ENCODE measurements at regions of chr12 and their contacts with region 1.

Region 1: DNA sequence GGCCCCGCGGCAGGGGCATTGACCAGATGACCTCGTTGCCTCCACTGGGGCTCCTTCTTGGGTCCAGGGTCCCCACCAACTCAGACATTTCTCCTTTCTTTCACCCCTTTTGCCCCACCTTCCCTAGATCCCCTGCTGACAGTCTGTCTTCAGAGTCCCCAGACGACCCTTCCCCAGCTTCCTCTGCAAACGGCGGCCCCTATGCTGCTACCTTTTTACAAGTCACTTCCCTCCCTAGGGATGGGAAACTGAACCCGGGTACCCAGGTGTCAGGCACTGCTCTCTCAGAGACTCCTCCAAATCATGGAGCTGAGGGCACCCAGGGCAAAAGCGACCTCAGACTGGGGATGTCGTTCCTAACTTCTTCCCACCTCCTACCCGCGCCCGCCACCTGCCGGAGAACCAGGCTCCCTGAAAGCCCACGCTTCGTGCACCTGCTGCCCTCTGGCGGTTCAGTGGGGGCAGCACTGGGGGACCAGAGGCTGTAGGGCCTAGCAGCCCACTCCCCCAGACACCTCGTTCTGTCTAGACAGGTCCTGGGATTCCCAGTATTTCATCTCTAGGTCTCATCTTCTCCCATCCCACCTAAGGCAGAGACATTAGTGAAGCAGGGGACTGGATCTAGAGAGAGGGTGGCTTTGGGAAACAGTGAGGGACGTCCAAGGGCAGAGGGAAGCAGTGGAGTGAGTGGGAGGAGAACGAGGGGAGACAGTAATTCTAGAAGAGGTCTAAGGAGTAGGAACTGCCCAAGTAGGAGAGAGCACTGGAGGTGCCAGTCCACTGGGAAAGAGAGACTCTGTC is 4.9 kb downstream of the ZNF385A start:
- DNase-seq: peak; percentile 92
- ATAC-seq: peak; percentile 98
- H3K4me3 Mint-ChIP-seq: no peak overlapping the region
- H3K27ac Mint-ChIP-seq: peak overlapping the region; percentile 8
- H3K4me1 Mint-ChIP-seq: peaks cover 8% of the 10 kb centered on the region
- H3K27me3 Mint-ChIP-seq: no peaks in the 10 kb centered on the region

Region 2: DNA sequence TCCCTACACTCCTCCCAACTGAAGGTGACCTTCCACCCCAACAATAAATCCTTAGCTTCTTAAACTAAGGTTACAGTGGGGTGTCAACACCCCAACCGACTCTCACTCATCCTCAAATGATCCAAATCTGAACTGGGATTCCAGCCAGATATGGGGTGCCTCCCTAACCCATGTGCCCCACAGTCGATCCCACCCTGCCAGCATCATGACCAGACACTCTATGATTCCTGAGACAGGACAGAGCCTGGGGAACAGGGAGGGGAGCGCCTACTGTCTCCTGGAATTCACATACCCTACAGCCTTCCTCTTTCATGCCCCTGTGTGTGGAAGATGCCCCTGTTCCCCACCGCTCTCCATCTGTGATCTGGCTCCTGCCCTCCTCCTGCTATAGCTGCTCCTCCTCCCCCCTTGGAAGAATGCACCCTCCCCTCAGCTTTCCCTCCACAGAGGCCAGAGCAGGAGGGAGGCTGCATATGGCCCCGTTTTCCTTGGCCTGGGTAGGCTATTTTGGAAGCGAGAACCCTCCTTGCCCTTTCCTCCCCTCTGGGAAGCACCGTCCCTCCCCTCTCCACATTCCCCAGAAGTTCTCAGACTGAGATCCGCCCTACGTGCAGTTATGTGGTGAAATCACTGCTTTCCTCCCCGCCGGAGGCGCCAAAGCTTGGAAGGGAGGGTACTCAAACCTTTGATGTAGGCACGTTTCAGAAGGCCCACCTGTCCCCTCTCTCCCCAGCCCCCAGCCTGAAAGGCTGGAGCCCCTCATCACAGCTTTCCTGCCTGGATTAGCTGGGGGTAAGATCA is 238.8 kb before region 1 on chr12:
- CTCF ChIA-PET with region 1: no interaction called
- DNase-seq: no peak
- ATAC-seq: no peak
- H3K4me3 Mint-ChIP-seq: no peak overlapping the region
- H3K27ac Mint-ChIP-seq: no peak overlapping the region
- H3K4me1 Mint-ChIP-seq: no peaks in the 10 kb centered on the region
- H3K27me3 Mint-ChIP-seq: peaks cover 61% of the 10 kb centered on the region

Region 3: DNA sequence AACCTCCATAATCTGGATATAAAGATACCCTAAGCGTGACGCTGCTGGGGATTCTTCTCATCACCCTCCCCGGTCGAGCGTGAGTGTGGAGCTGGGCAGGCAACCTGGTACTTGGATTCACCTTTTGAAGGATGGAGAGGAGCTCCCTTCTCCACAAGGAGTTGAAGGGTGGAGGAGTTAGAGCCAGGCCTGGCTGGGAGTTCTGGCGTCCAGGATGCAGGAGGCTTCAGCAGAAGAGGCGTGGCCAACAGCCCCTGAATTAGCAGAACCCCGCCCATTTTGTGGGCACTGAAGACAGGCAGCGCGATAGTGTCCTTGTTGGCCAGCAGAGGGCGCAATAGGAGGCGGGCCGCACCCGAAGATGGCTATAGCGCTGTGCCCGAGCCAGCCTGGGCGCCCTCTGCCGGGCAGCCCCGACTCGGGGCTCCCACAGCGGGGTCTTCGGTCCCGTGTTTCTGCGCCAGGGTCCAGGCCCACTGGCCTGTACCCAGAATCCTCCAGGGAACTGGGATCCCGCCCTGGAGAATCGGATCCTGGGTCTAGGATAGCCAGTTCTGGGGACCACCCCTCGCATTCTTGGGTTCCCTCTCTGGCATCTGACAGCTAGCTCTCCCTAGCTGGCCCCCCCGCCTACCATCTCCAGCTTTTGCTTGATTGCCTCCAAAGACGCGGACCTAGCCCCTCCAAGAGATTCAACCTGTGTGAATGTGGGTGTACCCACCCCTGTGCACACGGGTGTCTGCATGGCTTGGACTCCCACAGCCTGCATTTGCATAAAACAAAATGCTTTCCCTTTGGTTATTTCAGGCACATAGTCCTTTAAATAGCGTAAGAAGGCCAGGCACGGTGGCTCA is 164.8 kb before region 1 on chr12:
- CTCF ChIA-PET with region 1: interaction called, 37 read pairs
- DNase-seq: peak; percentile 95
- ATAC-seq: peak; percentile 90
- H3K4me3 Mint-ChIP-seq: peak overlapping the region; percentile 61
- H3K27ac Mint-ChIP-seq: peak overlapping the region; percentile 18
- H3K4me1 Mint-ChIP-seq: peaks cover 36% of the 10 kb centered on the region
- H3K27me3 Mint-ChIP-seq: peaks cover 7% of the 10 kb centered on the region

Region 4: GRCh38 chr12:54251667-54252284 is 127.8 kb before region 1 on chr12:
- CTCF ChIA-PET with region 1: interaction called, 20 read pairs
- DNase-seq: no peak
- ATAC-seq: peak; percentile 45
- H3K4me3 Mint-ChIP-seq: no peak overlapping the region
- H3K27ac Mint-ChIP-seq: peak overlapping the region; percentile 19
- H3K4me1 Mint-ChIP-seq: peaks cover 4% of the 10 kb centered on the region
- H3K27me3 Mint-ChIP-seq: no peaks in the 10 kb centered on the region

Region 5: DNA sequence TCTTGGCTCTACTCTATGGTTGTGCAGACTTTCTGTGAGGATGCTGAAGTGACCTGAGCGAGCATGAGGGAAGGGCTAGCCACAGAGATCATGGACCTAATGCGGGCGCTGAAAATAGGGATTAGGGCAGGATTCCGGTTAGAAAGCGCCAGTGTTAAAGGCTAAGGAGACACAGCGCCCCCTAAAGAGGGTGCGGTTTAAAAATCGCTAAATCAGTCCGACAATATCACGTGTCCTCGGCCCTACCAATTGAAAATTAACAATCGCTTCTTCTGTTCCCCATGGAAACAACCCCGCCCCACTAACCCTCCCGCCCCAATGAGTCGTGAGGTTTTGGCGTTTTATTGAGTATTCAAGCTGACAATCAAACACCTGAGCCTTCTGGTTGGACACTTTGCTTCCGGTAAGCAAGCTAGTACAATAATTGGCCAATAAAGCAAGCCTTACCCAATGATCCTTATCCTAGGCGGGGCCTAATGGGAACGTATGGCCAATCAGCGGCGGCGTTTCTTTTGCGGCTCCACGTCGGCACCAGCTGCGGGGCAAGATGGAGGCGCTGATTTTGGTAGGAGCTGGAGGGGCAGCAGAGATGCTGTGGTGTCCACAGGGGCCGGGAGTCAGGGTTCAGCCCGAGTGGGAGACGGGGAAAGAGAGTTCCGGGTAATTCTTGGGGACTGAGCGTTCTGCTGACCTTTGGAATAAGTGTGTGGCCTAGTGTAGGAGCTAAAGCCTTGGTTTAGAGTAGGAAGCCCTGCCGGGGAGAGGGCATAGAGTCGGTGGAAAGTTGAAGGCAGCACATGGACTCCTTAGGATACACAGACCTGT is 54.8 kb before region 1 on chr12 and contains the start of gene COPZ1:
- CTCF ChIA-PET with region 1: interaction called, 17 read pairs
- DNase-seq: peak; percentile 99
- ATAC-seq: peak; percentile 99
- H3K4me3 Mint-ChIP-seq: peak within 1 kb of the TSS; percentile 93
- H3K27ac Mint-ChIP-seq: peak within 1 kb of the TSS; percentile 91
- H3K4me1 Mint-ChIP-seq: peaks cover 31% of the 10 kb centered on the region
- H3K27me3 Mint-ChIP-seq: no peaks in the 10 kb centered on the region
- total RNA-seq, gene COPZ1: 90.8 to 104 TPM

Region 6: DNA sequence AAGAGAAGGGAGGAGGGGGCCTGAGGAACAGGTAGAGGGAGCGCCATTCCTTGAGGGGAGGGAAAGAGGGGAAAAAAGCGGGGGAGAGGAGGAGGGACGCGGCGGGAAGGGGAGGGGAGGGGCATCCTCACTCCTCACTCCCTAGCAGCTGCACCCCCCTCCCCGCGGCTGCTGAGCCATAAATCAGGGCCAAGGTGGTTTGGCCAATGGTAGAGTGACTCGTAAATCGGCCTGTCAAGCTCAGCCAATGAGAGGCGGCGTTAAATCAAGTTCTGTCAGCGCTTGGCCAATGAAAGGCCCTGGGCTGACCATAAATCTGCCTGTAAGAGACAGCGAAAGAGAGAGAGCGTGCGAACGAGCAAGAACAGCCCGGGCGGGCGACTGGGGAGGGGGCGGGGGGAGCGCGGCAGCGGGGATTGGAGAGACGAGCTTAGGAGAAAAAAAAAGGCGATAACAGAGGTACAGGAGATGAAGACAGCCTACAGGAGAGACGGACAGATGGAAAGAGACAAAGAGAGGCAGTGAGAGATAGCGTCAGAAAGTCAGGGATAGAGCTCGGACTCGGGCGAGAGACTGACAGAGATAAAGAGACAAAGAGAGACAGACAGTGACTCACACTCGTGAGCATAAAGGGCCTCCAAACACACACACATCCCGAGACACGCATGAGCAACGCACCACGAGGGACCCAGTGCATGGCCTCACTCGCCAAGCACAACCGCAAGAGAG is 20.4 kb before region 1 on chr12:
- CTCF ChIA-PET with region 1: interaction called, 52 read pairs
- DNase-seq: peak; percentile 97
- ATAC-seq: peak; percentile 97
- H3K4me3 Mint-ChIP-seq: no peak overlapping the region
- H3K27ac Mint-ChIP-seq: no peak overlapping the region
- H3K4me1 Mint-ChIP-seq: peaks cover 16% of the 10 kb centered on the region
- H3K27me3 Mint-ChIP-seq: peaks cover 6% of the 10 kb centered on the region

Region 7: GRCh38 chr12:54398995-54399793 is 19.6 kb after region 1 on chr12:
- CTCF ChIA-PET with region 1: interaction called, 76 read pairs
- DNase-seq: peak; percentile 90
- ATAC-seq: peak; percentile 88
- H3K4me3 Mint-ChIP-seq: no peak overlapping the region
- H3K27ac Mint-ChIP-seq: no peak overlapping the region
- H3K4me1 Mint-ChIP-seq: peaks cover 26% of the 10 kb centered on the region
- H3K27me3 Mint-ChIP-seq: no peaks in the 10 kb centered on the region

Measured in activated CD8-positive, alpha-beta memory T cell treated with anti-CD3 and anti-CD28 coated beads, Interleukin-2, amount 10 ng/mL, durations not matched to agents 7 days and 5 days (primary cell).